Dendritic cell treated with granulocyte-macrophage colony-stimulating factor and Interleukin-4, amounts not matched to agents 40 ng/mL and 50 ng/mL, for 4 days (primary cell): ENCODE measurements at regions of chr10 and their contacts with region 1.

Region 1: DNA sequence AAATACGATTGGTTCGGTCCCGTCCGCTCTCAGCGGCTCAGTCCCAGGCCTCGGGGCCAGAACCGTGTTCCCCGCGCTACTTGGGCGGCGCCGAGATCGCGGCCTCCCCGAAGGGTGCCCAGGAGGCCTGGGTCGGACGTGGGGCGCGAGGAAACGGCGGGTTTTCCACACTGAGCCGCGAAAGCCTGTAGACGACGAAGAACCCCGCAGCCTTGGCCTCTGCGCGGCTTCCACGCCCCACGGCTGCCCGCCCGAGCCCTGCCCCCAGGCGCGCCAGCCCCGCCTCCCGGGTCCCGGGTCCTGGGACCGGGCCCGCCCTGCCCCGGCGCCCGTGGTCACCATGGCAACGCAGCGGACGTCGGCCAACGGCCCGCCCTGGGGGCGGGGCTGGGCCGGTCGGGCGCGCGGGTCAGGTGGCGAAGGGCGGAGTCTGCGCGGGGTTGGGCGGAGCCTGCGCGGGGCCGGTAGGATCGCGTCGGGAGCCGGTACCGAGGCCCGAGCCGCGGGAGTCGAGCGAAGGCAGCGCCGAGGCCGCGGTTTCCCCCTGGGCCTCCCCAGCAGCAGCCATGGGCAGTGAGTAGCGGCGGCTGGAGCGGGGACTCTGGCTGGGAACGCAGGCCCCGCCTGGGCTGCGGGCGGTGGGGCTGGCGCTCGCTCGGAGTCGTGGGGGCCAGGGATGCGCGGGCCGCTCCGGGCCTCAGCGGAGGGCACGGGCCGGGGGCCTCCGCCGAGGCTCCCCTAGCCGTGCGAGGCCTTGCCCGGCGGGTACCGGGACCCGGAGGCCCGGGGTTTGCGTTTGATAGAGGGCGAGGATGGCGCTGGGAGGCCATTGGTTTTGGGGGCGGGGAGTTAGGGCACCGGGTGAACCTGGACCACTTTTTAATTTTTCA is at the start of gene SEC61A2:
- H3K4me3 Mint-ChIP-seq: peak within 1 kb of the TSS; percentile 84
- H3K27ac Mint-ChIP-seq: peak within 1 kb of the TSS; percentile 92
- H3K4me1 Mint-ChIP-seq: peaks cover 24% of the 10 kb centered on the region
- H3K27me3 Mint-ChIP-seq: peaks cover 4% of the 10 kb centered on the region

Region 2: GRCh38 chr10:12056748-12057147 is 72.7 kb before region 1 on chr10:
- intact Hi-C with region 1: no loop called
- H3K4me3 Mint-ChIP-seq: no peak overlapping the region
- H3K27ac Mint-ChIP-seq: peak overlapping the region; percentile 7
- H3K4me1 Mint-ChIP-seq: peaks cover 24% of the 10 kb centered on the region
- H3K27me3 Mint-ChIP-seq: no peaks in the 10 kb centered on the region

Region 3: DNA sequence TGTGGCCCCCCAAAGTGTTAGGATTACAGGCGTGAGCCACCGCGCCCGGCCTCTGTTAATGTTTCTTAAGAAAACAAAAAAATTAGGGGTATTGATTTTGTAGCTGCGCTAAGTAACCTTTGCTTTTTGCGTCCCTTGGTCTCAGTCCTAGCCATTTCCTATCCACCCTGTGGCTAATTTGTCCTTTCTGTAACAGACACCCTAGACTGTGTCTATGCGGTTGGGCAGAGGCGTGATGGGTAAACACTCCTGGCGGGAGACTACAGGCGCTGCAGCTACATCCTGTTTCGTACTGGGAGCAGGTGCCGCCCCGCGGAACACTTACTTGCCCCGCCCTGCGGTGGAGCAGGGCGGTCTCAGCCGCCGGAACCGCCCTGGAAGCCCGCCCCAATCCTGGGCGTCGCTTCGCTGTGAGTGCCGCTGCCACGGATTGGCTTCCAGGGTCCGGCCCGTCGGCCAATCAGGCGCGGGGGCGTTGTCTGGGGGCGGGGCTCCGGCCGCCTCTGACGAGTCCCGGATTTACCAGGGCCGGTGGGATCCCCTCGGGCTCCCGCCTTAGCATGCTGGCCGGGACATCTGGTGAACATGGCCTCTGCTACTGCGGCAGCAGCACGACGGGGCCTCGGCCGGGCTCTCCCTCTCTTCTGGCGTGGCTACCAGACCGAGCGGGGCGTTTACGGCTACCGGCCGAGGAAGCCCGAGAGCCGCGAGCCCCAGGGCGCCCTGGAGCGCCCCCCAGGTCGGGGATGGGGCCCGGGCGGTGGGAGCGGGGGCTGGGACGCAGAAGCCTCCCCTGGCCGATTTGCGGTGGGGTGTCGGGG is 60.8 kb before region 1 on chr10 and contains the start of gene DHTKD1:
- intact Hi-C with region 1: loop called (anchors 1 kb)
- H3K4me3 Mint-ChIP-seq: peak within 1 kb of the TSS; percentile 74
- H3K27ac Mint-ChIP-seq: peak within 1 kb of the TSS; percentile 82
- H3K4me1 Mint-ChIP-seq: peaks cover 19% of the 10 kb centered on the region
- H3K27me3 Mint-ChIP-seq: no peaks in the 10 kb centered on the region

Region 4: DNA sequence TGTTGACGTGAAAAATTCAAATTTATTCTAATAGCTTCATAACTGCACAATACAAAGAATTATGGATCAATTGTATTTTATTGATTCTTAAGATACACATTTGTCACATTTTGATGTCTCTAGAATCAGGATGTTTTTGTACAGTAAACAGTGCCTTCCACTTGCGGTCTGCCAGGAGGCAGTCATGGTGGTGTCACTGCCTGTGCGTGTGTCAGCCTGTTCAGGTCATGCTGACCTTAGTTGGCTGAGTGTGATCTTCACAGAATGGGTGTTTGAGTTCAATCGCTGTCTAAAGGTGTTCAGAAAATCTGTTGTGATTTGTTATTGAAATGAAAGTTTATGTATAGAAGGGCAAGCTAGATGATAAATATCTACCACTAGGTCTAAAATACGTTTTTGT is 20.7 kb after region 1 on chr10:
- intact Hi-C with region 1: no loop called
- H3K4me3 Mint-ChIP-seq: no peak overlapping the region
- H3K27ac Mint-ChIP-seq: no peak overlapping the region
- H3K4me1 Mint-ChIP-seq: no peaks in the 10 kb centered on the region
- H3K27me3 Mint-ChIP-seq: peaks cover 61% of the 10 kb centered on the region

Region 5: GRCh38 chr10:12195603-12196506 is 66.4 kb after region 1 on chr10 and contains the starts of genes CDC123 and NUDT5:
- intact Hi-C with region 1: loop called (anchors 5 kb)
- H3K4me3 Mint-ChIP-seq: peak within 1 kb of the TSS; percentile 95
- H3K27ac Mint-ChIP-seq: peak within 1 kb of the TSS; percentile 95
- H3K4me1 Mint-ChIP-seq: peaks cover 55% of the 10 kb centered on the region
- H3K27me3 Mint-ChIP-seq: no peaks in the 10 kb centered on the region